ENCODE measurements at regions of chr5 and their contacts with region 1.

Region 1: GRCh38 chr5:55172051-55172899 is 702 bp downstream of the CDC20B start:
- DNase-seq: peak in 1 of 2 donors; percentile 52
- ATAC-seq: peak; percentile 65 to 94 (median 80)
- H3K4me3 ChIP-seq: peak overlapping the region in 9 of 10 donors; percentile 34 to 63 (median 53)
- H3K27ac ChIP-seq: no peak overlapping the region
- H3K4me1 ChIP-seq: peaks cover 12 to 34% (median 28%) of the 10 kb centered on the region in 9 donors
- H3K27me3 ChIP-seq: peaks cover 0 to 91% (median 55%) of the 10 kb centered on the region in 7 donors
- CTCF ChIP-seq: peak; percentile 76 to 91 (median 85)

Region 2: DNA sequence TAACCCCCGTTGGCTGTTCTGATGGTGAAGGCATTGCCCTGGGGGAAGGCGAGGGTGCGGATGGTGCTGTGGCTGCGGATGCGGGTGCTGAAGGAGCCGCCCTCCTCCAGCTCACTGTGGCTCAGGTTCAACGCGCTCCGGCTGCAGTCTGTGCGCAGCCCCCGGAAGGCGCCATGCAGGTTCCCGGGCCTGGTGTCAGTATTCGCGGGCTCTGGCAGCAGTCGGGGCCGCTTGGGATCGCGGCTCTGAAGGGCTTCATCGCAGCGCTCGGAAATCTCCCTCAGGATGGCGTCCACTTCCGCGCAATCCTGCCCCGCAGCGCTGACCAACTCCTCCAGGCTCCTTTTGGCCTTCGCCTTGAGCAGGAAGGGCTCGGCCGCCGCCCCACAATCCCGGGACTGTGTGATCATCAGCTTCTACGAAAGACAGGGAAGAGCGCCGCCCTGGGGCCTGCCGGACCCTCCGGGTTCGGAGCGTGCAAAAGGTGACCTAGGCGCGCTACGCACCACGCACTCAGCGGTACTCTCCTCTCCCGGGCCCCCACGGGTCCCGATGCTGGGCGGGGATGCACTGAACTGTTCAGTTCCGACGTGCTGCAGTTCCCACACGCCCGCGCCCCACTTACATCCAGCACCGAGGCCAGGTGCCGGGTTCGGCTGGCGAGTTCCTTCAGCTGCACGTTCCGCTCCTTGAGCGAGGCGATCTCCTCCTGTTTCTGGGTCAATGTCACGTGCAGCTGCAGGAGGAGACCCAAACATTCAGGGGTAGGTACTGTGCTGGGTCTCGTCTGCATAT is 48.3 kb after region 1 on chr5:
- intact Hi-C with region 1: loop called in 4 of 10 experiments (anchors 5 to 10 kb)
- DNase-seq: no peak
- ATAC-seq: peak in 7 of 8 donors; percentile 23 to 59 (median 42)
- H3K4me3 ChIP-seq: peak overlapping the region in 8 of 10 donors; percentile 6 to 45 (median 36)
- H3K27ac ChIP-seq: no peak overlapping the region
- H3K4me1 ChIP-seq: peaks cover 0 to 26% (median 12%) of the 10 kb centered on the region in 9 donors
- H3K27me3 ChIP-seq: peaks cover 43 to 98% (median 91%) of the 10 kb centered on the region in 7 donors
- CTCF ChIP-seq: peak in 1 of 9 donors; percentile 11

Region 3: DNA sequence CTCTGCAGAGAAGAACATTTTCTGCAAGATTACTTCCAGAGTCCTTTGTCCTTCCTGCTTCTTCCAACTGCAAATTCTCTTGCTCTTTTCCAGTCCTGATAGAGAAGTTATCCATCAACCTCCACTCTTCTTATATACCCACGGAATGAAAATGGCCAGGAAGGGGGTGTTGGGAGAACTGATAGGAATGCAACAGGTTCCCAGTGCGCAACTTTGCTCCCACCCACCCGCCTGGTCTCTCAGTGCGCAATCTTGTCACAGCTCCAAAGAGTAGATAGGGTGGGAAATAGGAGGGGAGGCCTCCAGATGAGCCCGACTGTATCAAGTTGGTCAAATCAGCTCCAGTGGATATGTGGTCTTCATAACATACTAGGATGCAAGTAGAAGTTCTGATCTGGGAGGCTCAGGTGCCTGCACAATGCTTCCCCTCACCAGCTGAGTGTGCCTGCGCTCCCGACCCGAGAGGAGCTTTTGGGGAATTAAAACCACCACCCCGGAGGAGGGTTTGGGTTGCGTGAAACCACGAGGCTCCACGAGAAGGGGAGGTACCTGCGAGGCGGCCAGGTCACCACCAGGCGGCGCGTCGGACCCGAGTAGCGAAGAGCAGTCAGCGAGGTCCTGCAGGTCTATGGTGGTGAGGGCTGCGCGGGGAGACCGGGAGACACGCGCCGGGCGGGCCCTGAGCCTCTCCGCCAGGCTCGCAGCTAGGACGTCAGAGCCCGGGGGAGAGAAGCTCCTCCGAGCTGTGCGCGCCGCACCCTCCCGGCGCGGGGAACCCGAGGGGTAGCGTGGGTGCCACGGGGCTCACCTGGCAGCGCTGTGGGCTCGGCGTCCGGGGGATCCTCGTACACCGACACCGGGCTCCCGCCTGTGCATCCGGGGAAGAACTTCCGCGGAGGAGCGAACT is 54.0 kb after region 1 on chr5:
- intact Hi-C with region 1: loop called in 8 of 10 experiments (anchors 5 to 10 kb)
- DNase-seq: peak in 1 of 2 donors; percentile 33
- ATAC-seq: peak in 7 of 8 donors; percentile 17 to 65 (median 38)
- H3K4me3 ChIP-seq: peak overlapping the region; percentile 17 to 48 (median 40)
- H3K27ac ChIP-seq: no peak overlapping the region
- H3K4me1 ChIP-seq: peaks cover 0 to 35% (median 21%) of the 10 kb centered on the region in 9 donors
- H3K27me3 ChIP-seq: peaks cover 66 to 100% (median 100%) of the 10 kb centered on the region in 7 donors
- CTCF ChIP-seq: peak in 6 of 9 donors; percentile 20 to 40 (median 32)

Region 4: DNA sequence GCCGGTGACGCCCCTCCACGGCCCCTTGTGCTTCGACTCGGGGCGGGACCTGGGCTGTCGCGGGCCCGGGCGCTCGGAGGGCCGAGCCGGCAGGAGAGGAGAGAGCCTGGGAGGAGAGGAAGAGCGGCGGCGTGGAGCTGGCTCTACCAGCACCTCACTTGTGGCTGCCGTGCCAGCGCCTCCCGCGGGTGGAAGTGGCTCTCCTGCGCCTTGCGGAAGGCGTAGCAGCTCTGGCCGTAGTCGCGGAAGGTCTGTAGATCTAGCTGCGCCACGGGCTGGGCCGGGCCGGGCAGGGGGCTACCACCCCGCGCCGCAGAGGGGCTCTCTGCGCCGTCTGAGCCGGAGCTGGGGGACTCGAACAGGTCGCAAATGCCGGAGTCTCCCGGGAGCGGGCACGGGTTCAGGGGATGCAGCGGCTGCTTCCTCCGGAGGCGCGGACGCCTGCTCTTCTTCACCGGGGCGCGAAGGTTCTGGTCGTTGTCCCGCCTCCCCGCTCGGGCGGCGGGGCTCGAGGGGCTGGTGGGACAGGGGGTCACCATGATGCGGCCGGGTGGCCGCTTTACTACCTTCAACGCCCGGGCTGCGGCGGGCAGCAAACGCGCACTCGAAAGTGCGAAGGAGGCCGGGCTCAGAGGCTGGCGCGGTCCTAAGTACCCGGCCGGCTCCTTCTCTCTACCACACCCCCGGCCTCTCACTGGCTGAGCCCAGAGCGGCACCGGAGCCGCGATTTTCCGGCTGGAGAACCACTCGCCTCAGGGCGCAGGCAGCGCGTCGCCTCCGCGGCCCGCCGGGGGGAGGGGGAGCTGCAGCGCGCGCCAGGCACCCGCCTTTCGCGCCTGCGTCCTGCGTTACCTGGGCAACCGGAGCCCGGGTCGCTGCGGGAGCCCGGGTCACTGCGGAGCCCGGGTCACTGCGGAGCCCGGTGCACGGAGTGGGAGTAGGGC is 61.0 kb after region 1 on chr5 and contains the start of gene CCNO:
- intact Hi-C with region 1: loop called in 7 of 10 experiments (anchors 5 to 10 kb)
- DNase-seq: peak; percentile 41 to 67
- ATAC-seq: peak; percentile 83 to 92 (median 87)
- H3K4me3 ChIP-seq: peak within 1 kb of the TSS; percentile 44 to 71 (median 52)
- H3K27ac ChIP-seq: no peak within 1 kb of the TSS
- H3K4me1 ChIP-seq: peaks cover 6 to 42% (median 38%) of the 10 kb centered on the region in 9 donors
- H3K27me3 ChIP-seq: peaks cover 26 to 100% (median 95%) of the 10 kb centered on the region in 7 donors
- CTCF ChIP-seq: peak in 1 of 9 donors; percentile 13
- total RNA-seq, gene CCNO: 0.15 to 0.41 TPM in 2 of 10 donors, not detected in the others

Region 5: GRCh38 chr5:55691265-55692105 is 519.2 kb after region 1 on chr5:
- intact Hi-C with region 1: loop called in 1 of 10 experiments (anchors 10 kb)
- DNase-seq: no peak
- ATAC-seq: peak; percentile 65 to 86 (median 73)
- H3K4me3 ChIP-seq: peak overlapping the region in 3 of 10 donors; percentile 11 to 19 (median 19)
- H3K27ac ChIP-seq: peak overlapping the region in 6 of 10 donors; percentile 5 to 52 (median 30)
- H3K4me1 ChIP-seq: peaks cover 6 to 34% (median 21%) of the 10 kb centered on the region in 9 donors
- H3K27me3 ChIP-seq: no peaks in the 10 kb centered on the region
- CTCF ChIP-seq: peak; percentile 42 to 83 (median 72)

Region 6: GRCh38 chr5:55711968-55712859 is 539.9 kb after region 1 on chr5 and contains the start of gene SLC38A9:
- intact Hi-C with region 1: loop called in 3 of 10 experiments (anchors 10 kb)
- DNase-seq: peak; percentile 95 to 96
- ATAC-seq: peak; percentile 100
- H3K4me3 ChIP-seq: peak within 1 kb of the TSS; percentile 54 to 98 (median 82)
- H3K27ac ChIP-seq: peak within 1 kb of the TSS in 8 of 10 donors; percentile 46 to 88 (median 66)
- H3K4me1 ChIP-seq: peaks cover 0 to 15% (median 13%) of the 10 kb centered on the region in 9 donors
- H3K27me3 ChIP-seq: no peaks in the 10 kb centered on the region
- CTCF ChIP-seq: no peak
- total RNA-seq, gene SLC38A9: 5.2 to 9.1 (median 6.8) TPM

Measured in heart right ventricle (tissue), 16 donors.